ENCODE measurements at regions of chr21 and their contacts with region 1.

Region 1: GRCh38 chr21:34345091-34345871 is 18.5 kb upstream of the KCNE2 start:
- DNase-seq: no peak
- H3K4me3 ChIP-seq: no peak overlapping the region
- H3K27ac ChIP-seq: no peak overlapping the region
- H3K4me1 ChIP-seq: no peaks in the 10 kb centered on the region
- H3K27me3 ChIP-seq: peaks cover 4% of the 10 kb centered on the region
- CTCF ChIP-seq: no peak

Region 2: GRCh38 chr21:34202553-34203372 is 142.5 kb before region 1 on chr21:
- CTCF ChIA-PET with region 1: interaction called, 3 read pairs
- dilution Hi-C with region 1: no loop called
- in situ Hi-C with region 1: no loop called
- intact Hi-C with region 1: loop called (anchors 5 kb)
- DNase-seq: no peak
- H3K4me3 ChIP-seq: no peak overlapping the region
- H3K27ac ChIP-seq: no peak overlapping the region
- H3K4me1 ChIP-seq: peaks cover 4% of the 10 kb centered on the region
- H3K27me3 ChIP-seq: no peaks in the 10 kb centered on the region
- CTCF ChIP-seq: no peak

Region 3: GRCh38 chr21:34313116-34313515 is 32.2 kb before region 1 on chr21:
- CTCF ChIA-PET with region 1: no interaction called
- dilution Hi-C with region 1: loop called (anchors 5 kb)
- in situ Hi-C with region 1: no loop called
- intact Hi-C with region 1: no loop called
- DNase-seq: peak; percentile 8
- H3K4me3 ChIP-seq: no peak overlapping the region
- H3K27ac ChIP-seq: no peak overlapping the region
- H3K4me1 ChIP-seq: peaks cover 9% of the 10 kb centered on the region
- H3K27me3 ChIP-seq: no peaks in the 10 kb centered on the region
- CTCF ChIP-seq: no peak

Measured in mammary epithelial cell (primary cell).